Activated CD4-positive, alpha-beta T cell treated with anti-CD3 and anti-CD28 coated beads, Interleukin-2, amount 10 ng/mL, durations not matched to agents 24 days and 14 days (primary cell): ENCODE measurements at regions of chr12 and their contacts with region 1.

Region 1: GRCh38 chr12:123601602-123602489 is at the start of gene DDX55:
- DNase-seq: peak; percentile 96
- H3K4me3 Mint-ChIP-seq: peak within 1 kb of the TSS; percentile 93
- H3K27ac Mint-ChIP-seq: peak within 1 kb of the TSS; percentile 94
- H3K4me1 Mint-ChIP-seq: peaks cover 19% of the 10 kb centered on the region
- H3K27me3 Mint-ChIP-seq: no peaks in the 10 kb centered on the region
- total RNA-seq, gene DDX55: 68.2 and 72.0 TPM in 2 replicates

Region 2: GRCh38 chr12:123633379-123634141 is 31.7 kb after region 1 on chr12 and contains the starts of genes EIF2B1 and GTF2H3:
- intact Hi-C with region 1: loop called (anchors 1 kb)
- DNase-seq: peak; percentile 99
- H3K4me3 Mint-ChIP-seq: peak within 1 kb of the TSS; percentile 98
- H3K27ac Mint-ChIP-seq: peak within 1 kb of the TSS; percentile 93
- H3K4me1 Mint-ChIP-seq: peaks cover 17% of the 10 kb centered on the region
- H3K27me3 Mint-ChIP-seq: no peaks in the 10 kb centered on the region
- total RNA-seq, gene EIF2B1: 81.5 and 84.8 TPM in 2 replicates
- total RNA-seq, gene GTF2H3: 66.8 and 69.7 TPM in 2 replicates